ENCODE measurements at regions of chr2 and their contacts with region 1.

Region 1: GRCh38 chr2:193837111-193837737 is 1642.5 kb upstream of the TMEFF2 start:
- H3K4me3 Mint-ChIP-seq: no peak overlapping the region
- H3K27ac Mint-ChIP-seq: no peak overlapping the region
- H3K4me1 Mint-ChIP-seq: no peaks in the 10 kb centered on the region
- H3K27me3 Mint-ChIP-seq: no peaks in the 10 kb centered on the region

Region 2: DNA sequence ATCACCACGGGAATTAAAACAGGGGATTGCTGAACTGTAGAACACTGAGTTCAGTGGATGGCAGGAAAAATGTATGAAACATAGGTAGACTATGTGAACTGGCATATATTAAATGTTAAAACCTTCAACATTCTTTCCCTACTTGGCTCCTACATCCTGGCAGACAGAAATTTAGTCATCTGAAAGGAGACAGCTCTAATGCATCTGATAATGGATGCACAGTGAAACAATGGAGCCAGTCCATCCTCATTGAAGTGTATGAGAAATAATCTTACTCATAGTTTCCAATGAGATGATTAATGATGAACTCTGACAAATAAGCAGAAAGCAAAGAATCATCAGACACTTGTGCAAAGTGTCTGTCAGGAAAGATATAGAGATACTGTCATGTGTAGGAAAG is 12.8 kb before region 1 on chr2:
- intact Hi-C with region 1: loop called (anchors 1 kb)
- H3K4me3 Mint-ChIP-seq: no peak overlapping the region
- H3K27ac Mint-ChIP-seq: no peak overlapping the region
- H3K4me1 Mint-ChIP-seq: no peaks in the 10 kb centered on the region
- H3K27me3 Mint-ChIP-seq: no peaks in the 10 kb centered on the region

Measured in dendritic cell treated with granulocyte-macrophage colony-stimulating factor and Interleukin-4, amounts not matched to agents 40 ng/mL and 50 ng/mL, for 4 days (primary cell).